ENCODE measurements at regions of chr14 and their contacts with region 1.

Region 1: GRCh38 chr14:22776215-22776614 is 9.7 kb downstream of the OXA1L start:
- DNase-seq: no peak
- H3K4me3 Mint-ChIP-seq: no peak overlapping the region
- H3K27ac Mint-ChIP-seq: no peak overlapping the region
- H3K4me1 Mint-ChIP-seq: peaks cover 4% of the 10 kb centered on the region
- H3K27me3 Mint-ChIP-seq: no peaks in the 10 kb centered on the region
- CTCF ChIP-seq: no peak

Region 2: DNA sequence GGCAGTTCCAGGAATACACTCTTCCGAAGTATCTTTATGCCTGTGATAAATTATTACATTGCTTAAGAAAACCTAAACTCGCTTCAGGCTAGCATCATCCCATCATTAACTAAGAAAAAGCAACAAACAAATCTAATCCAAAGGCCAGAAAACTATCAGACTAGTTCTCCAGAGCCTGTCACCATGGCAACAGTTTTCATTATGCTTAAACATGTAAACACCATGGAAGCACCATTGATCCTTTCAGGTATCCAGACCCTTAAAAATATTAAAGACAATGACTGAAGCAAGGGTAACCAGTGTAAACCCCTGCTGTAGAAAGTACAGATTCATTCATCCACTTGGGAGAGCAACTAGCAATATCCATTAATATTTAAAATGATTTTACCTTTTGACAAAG is 197.0 kb before region 1 on chr14:
- CTCF ChIA-PET with region 1: no interaction called
- intact Hi-C with region 1: no loop called
- DNase-seq: no peak
- H3K4me3 Mint-ChIP-seq: no peak overlapping the region
- H3K27ac Mint-ChIP-seq: no peak overlapping the region
- H3K4me1 Mint-ChIP-seq: peaks cover 2% of the 10 kb centered on the region
- H3K27me3 Mint-ChIP-seq: no peaks in the 10 kb centered on the region
- CTCF ChIP-seq: no peak

Region 3: DNA sequence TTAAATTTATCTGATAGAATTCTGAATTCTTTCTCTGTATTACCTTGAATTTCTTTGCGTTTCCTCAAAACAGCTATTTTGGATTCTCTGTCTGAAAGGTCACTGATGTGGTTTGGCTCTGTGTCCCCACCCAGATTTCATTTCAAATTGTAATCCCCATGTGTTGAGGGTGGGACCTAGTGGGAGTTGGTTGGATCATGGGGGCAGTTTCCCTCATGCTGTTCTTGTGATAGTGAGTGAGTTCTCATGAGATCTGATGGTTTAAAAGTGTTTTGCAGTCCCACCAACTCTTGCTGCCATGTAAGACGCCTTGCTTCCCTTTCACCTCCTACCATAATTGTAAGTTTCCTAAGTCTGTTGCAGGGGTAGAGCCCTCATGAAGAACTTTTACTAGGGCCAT is 98.0 kb before region 1 on chr14:
- CTCF ChIA-PET with region 1: no interaction called
- intact Hi-C with region 1: no loop called
- DNase-seq: no peak
- H3K4me3 Mint-ChIP-seq: no peak overlapping the region
- H3K27ac Mint-ChIP-seq: no peak overlapping the region
- H3K4me1 Mint-ChIP-seq: no peaks in the 10 kb centered on the region
- H3K27me3 Mint-ChIP-seq: peaks cover 21% of the 10 kb centered on the region
- CTCF ChIP-seq: no peak

Region 4: GRCh38 chr14:22822571-22823098 is 46.4 kb after region 1 on chr14:
- CTCF ChIA-PET with region 1: interaction called, 4 read pairs
- intact Hi-C with region 1: loop called (anchors 2 kb)
- DNase-seq: peak; percentile 87
- H3K4me3 Mint-ChIP-seq: peak overlapping the region; percentile 71
- H3K27ac Mint-ChIP-seq: peak overlapping the region; percentile 94
- H3K4me1 Mint-ChIP-seq: peaks cover 54% of the 10 kb centered on the region
- H3K27me3 Mint-ChIP-seq: no peaks in the 10 kb centered on the region
- CTCF ChIP-seq: peak; percentile 66

Region 5: DNA sequence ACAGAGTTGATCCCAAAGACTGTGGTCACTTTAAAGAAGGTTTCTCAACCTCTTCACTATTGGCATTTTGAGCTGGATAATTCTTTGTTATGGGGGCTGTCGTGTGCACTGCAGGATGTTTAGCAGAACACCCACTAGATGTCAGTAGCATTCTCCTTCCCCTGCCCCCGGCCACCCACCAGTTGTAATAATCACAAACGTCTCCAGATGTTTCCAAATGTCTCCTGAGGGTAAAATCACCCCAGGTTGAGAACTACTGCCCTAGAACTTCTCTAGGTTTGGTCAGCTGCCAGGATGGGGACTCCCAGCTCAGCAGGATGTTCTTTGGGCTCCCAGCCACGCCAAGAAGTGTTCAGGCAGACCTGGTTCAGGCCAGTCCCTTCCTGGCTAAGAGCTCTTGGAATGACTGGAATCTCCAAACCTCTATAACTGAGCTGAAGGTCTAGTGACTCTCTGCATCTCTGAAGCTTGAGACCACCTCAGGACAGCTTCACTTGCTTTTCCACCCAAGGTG is 218.6 kb after region 1 on chr14:
- CTCF ChIA-PET with region 1: no interaction called
- intact Hi-C with region 1: no loop called
- DNase-seq: no peak
- H3K4me3 Mint-ChIP-seq: no peak overlapping the region
- H3K27ac Mint-ChIP-seq: no peak overlapping the region
- H3K4me1 Mint-ChIP-seq: no peaks in the 10 kb centered on the region
- H3K27me3 Mint-ChIP-seq: no peaks in the 10 kb centered on the region
- CTCF ChIP-seq: peak; percentile 42

Region 6: DNA sequence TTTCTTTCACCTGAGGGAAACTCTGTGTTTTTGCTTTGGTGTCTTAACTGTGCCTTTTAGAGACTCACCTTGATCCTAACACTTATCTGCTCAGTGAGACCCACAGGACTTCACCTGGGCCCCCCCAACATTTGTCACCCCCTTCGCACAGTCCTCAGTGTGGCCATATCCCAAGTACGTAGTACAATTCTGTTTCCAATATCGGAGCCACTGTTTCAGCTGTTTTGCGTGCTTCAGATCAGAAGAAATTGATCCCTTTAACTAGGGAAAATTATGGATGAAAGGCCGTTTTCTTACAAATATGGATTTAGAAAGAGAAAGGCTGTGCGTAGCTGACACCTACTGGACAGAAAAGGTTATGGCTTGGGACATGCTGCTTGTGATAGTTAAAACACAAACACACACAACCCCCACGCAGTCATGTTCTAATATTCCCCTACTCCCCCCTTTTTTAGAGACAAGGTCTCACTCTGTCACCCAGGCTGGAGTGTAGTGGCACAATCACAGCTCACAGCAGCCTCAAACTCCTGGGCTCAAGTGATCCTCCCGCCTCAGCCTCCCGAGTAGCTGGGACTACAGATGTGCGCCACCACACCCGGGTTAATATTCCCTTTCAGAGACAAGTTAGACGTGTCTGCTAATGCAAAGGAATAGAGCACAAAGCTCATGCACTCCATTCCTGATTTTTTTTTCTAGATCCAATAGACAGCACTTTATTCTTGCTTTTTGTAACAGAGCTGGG is 410.9 kb after region 1 on chr14:
- CTCF ChIA-PET with region 1: no interaction called
- intact Hi-C with region 1: no loop called
- DNase-seq: peak; percentile 34
- H3K4me3 Mint-ChIP-seq: no peak overlapping the region
- H3K27ac Mint-ChIP-seq: no peak overlapping the region
- H3K4me1 Mint-ChIP-seq: no peaks in the 10 kb centered on the region
- H3K27me3 Mint-ChIP-seq: peaks cover 20% of the 10 kb centered on the region
- CTCF ChIP-seq: peak; percentile 34

Measured in Calu3 (cell line).